Natural killer cell (primary cell): ENCODE measurements at regions of chr13 and their contacts with region 1.

Region 1: GRCh38 chr13:25574437-25575411 is 202.9 kb downstream of the ATP8A2 start:
- DNase-seq: peak; percentile 56 to 86
- ATAC-seq: peak; percentile 76 to 85 (median 79)
- H3K4me3 ChIP-seq: no peak overlapping the region
- H3K4me3 Mint-ChIP-seq: no peak overlapping the region
- H3K27ac ChIP-seq: no peak overlapping the region
- H3K27ac Mint-ChIP-seq: no peak overlapping the region
- H3K4me1 ChIP-seq: no peaks in the 10 kb centered on the region
- H3K4me1 Mint-ChIP-seq: no peaks in the 10 kb centered on the region
- H3K27me3 ChIP-seq: no peaks in the 10 kb centered on the region
- H3K27me3 Mint-ChIP-seq: peaks cover 33 to 42% of the 10 kb centered on the region in 2 donors
- CTCF ChIP-seq: peak; percentile 90

Region 2: GRCh38 chr13:25310891-25311290 is 263.8 kb before region 1 on chr13:
- intact Hi-C with region 1: no loop called
- DNase-seq: no peak
- ATAC-seq: no peak
- H3K4me3 ChIP-seq: no peak overlapping the region
- H3K4me3 Mint-ChIP-seq: no peak overlapping the region
- H3K27ac ChIP-seq: no peak overlapping the region
- H3K27ac Mint-ChIP-seq: no peak overlapping the region
- H3K4me1 ChIP-seq: no peaks in the 10 kb centered on the region
- H3K4me1 Mint-ChIP-seq: peaks cover 6 to 11% of the 10 kb centered on the region in 2 donors
- H3K27me3 ChIP-seq: no peaks in the 10 kb centered on the region
- H3K27me3 Mint-ChIP-seq: no peaks in the 10 kb centered on the region
- CTCF ChIP-seq: no peak

Region 3: DNA sequence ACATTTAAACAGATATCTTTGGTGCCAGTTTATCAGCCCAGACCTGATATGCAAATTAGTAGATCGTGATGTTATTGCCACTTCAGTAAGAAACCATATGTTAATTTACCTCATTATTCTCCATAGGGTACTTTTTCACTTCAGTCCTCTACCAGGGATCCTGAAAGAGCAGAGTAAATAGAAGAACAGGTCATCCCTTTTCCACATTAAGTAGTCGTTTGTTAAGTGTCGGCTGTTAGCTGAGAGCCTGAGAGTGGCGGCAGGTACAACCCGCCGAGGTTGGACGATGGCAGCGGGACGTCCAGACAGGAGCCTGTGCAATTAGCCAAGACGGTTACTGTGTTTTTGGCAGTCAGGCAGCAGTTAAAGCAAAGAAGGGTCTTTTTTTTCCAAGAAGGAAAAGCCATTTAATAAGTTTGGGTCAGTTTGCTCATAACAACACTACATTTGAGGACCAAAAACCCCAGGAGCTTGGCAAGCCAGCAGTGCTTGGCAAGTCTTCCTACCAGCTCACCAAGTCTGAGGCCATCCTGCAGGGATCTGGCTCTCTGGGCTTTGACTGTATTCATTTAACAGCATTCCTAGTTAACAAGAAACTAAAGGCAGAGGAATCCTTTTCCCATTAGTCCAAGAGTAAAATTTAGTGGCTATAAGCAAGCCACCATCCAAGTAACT is 245.3 kb after region 1 on chr13:
- intact Hi-C with region 1: loop called (anchors 10 kb)
- DNase-seq: no peak
- ATAC-seq: no peak
- H3K4me3 ChIP-seq: no peak overlapping the region
- H3K4me3 Mint-ChIP-seq: no peak overlapping the region
- H3K27ac ChIP-seq: no peak overlapping the region
- H3K27ac Mint-ChIP-seq: no peak overlapping the region
- H3K4me1 ChIP-seq: no peaks in the 10 kb centered on the region
- H3K4me1 Mint-ChIP-seq: no peaks in the 10 kb centered on the region
- H3K27me3 ChIP-seq: no peaks in the 10 kb centered on the region
- H3K27me3 Mint-ChIP-seq: peaks cover 2 to 24% of the 10 kb centered on the region in 2 donors
- CTCF ChIP-seq: no peak

Region 4: DNA sequence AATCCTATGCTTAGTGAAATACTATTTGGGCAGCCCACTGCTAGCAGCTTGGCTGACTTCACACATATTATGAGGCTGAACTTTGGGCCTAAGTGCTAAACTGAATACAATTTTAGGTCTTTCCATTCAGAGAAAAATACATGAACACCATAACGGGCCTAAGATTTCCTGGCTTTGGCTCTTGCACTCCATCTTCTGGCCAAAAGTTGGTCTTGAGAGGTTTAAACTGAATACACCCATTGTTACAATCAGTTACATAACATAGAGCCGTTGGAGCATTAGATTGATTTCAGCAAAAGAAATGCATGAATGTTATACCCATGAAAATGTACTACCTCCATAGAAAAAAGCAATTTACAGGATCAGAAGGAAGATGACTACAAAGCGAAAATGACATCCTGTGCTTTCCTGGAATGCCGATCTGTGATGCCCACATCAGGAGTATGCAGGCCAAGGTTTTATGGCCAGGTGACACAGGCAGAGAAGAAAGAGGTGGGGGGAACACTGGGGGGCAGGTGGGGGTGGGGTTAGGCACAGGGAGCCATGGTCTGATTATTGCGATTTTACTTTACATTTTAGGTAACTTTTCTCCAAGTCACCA is 488.2 kb after region 1 on chr13:
- intact Hi-C with region 1: loop called (anchors 1 kb)
- DNase-seq: peak in 1 of 2 donors; percentile 78
- ATAC-seq: peak in 2 of 3 donors; percentile 38 to 51
- H3K4me3 ChIP-seq: no peak overlapping the region
- H3K4me3 Mint-ChIP-seq: no peak overlapping the region
- H3K27ac ChIP-seq: no peak overlapping the region
- H3K27ac Mint-ChIP-seq: no peak overlapping the region
- H3K4me1 ChIP-seq: no peaks in the 10 kb centered on the region
- H3K4me1 Mint-ChIP-seq: no peaks in the 10 kb centered on the region
- H3K27me3 ChIP-seq: peaks cover 4% of the 10 kb centered on the region
- H3K27me3 Mint-ChIP-seq: peaks cover 5 to 44% of the 10 kb centered on the region in 2 donors
- CTCF ChIP-seq: peak; percentile 49

Region 5: GRCh38 chr13:26071691-26072090 is 497.0 kb after region 1 on chr13:
- intact Hi-C with region 1: loop called (anchors 1 kb)
- DNase-seq: no peak
- ATAC-seq: no peak
- H3K4me3 ChIP-seq: no peak overlapping the region
- H3K4me3 Mint-ChIP-seq: no peak overlapping the region
- H3K27ac ChIP-seq: no peak overlapping the region
- H3K27ac Mint-ChIP-seq: no peak overlapping the region
- H3K4me1 ChIP-seq: no peaks in the 10 kb centered on the region
- H3K4me1 Mint-ChIP-seq: no peaks in the 10 kb centered on the region
- H3K27me3 ChIP-seq: no peaks in the 10 kb centered on the region
- H3K27me3 Mint-ChIP-seq: peaks cover 10 to 20% of the 10 kb centered on the region in 2 donors
- CTCF ChIP-seq: no peak

Region 6: GRCh38 chr13:26698392-26699196 is 1123.9 kb after region 1 on chr13:
- intact Hi-C with region 1: loop called (anchors 5 kb)
- DNase-seq: peak; percentile 76 to 89
- ATAC-seq: peak; percentile 83 to 99 (median 94)
- H3K4me3 ChIP-seq: no peak overlapping the region
- H3K4me3 Mint-ChIP-seq: no peak overlapping the region
- H3K27ac ChIP-seq: no peak overlapping the region
- H3K27ac Mint-ChIP-seq: no peak overlapping the region
- H3K4me1 ChIP-seq: peaks cover 3% of the 10 kb centered on the region
- H3K4me1 Mint-ChIP-seq: peaks cover 4 to 7% of the 10 kb centered on the region in 2 donors
- H3K27me3 ChIP-seq: no peaks in the 10 kb centered on the region
- H3K27me3 Mint-ChIP-seq: peaks cover 4 to 27% of the 10 kb centered on the region in 2 donors
- CTCF ChIP-seq: peak; percentile 91